Activated CD4-positive, alpha-beta memory T cell treated with anti-CD3 and anti-CD28 coated beads for 36 hours (primary cell): ENCODE measurements at regions of chr6 and their contacts with region 1.

Region 1: GRCh38 chr6:118709859-118710350 is 58.5 kb upstream of the CEP85L start:
- DNase-seq: peak; percentile 88
- H3K4me3 Mint-ChIP-seq: peak overlapping the region; percentile 95
- H3K27ac Mint-ChIP-seq: peak overlapping the region; percentile 98
- H3K4me1 Mint-ChIP-seq: peaks cover 72% of the 10 kb centered on the region
- H3K27me3 Mint-ChIP-seq: no peaks in the 10 kb centered on the region

Region 2: DNA sequence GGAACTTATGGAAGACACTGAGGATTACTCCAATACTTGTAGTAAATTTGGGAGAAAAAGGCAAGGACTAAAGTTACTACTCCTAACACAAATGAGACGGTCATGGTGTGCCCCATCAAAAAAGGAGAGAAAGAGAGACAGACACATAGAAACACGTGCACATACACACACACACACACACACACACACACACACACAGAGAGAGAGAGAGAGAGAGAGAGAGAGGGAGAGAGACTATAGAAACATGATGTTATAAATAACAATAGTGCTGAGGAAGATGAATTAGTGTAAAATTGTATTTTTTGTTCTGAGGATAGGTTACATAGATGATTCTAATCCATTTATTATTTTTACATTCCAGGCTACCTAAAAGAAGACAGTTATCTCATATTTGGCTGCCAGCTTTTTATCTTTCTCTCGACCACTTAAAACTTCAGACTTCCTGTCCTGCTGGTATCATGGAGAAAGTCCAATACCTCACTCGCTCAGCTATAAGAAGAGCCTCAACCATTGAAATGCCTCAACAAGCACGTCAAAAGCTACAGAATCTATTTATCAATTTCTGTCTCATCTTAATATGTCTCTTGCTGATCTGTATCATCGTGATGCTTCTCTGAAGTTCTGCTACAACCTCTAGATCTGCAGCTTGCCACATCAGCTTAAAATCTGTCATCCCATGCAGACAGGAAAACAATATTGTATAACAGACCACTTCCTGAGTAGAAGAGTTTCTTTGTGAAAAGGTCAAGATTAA is 151.3 kb before region 1 on chr6:
- CTCF ChIA-PET with region 1: no interaction called
- POLR2A ChIA-PET with region 1: no interaction called
- intact Hi-C with region 1: loop called (anchors 5 kb)
- DNase-seq: peak; percentile 22
- H3K4me3 Mint-ChIP-seq: peak overlapping the region; percentile 35
- H3K27ac Mint-ChIP-seq: peak overlapping the region; percentile 85
- H3K4me1 Mint-ChIP-seq: peaks cover 32% of the 10 kb centered on the region
- H3K27me3 Mint-ChIP-seq: no peaks in the 10 kb centered on the region

Region 3: DNA sequence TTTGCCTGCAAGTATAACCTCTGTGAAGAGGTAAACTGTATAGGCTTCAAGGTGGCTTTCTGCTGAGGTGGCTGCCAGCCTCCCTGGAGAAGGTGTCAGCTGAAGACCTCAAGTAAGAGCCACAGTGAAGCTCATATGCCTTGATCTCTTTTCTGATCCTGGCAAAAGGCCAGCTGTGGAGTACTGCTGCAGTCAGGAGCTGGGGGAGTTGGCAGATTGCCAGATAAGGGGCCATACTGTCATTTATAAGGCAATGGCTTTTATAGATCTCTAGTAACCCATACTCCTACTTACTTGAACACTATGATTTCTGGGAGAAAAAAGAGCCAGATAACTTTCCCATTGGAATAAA is 49.7 kb before region 1 on chr6:
- CTCF ChIA-PET with region 1: interaction called, 12 read pairs
- POLR2A ChIA-PET with region 1: interaction called, 10 read pairs
- intact Hi-C with region 1: loop called (anchors 1 kb)
- DNase-seq: peak; percentile 54
- H3K4me3 Mint-ChIP-seq: peak overlapping the region; percentile 33
- H3K27ac Mint-ChIP-seq: peak overlapping the region; percentile 82
- H3K4me1 Mint-ChIP-seq: peaks cover 68% of the 10 kb centered on the region
- H3K27me3 Mint-ChIP-seq: no peaks in the 10 kb centered on the region

Region 4: DNA sequence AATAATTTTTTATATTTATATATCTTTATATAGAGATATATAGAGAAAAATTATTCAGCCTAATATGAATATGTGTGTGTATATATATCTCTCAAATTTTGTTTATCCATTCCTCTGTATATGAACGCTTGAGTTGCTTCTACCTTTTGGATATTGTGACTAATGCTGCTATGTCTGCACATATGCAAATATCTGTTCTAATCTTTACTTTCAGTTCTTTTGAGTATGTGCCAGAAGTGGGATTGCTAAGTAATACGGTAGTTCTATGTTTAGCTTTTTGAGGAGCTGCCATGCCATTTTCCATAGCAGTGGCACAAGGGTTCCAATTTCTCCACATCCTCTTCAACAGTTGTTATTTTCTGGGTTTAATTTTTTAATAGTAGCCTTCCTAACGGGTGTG is 14.3 kb after region 1 on chr6:
- CTCF ChIA-PET with region 1: interaction called, 18 read pairs
- POLR2A ChIA-PET with region 1: interaction called, 25 read pairs
- intact Hi-C with region 1: loop called (anchors 1 kb)
- DNase-seq: no peak
- H3K4me3 Mint-ChIP-seq: no peak overlapping the region
- H3K27ac Mint-ChIP-seq: peak overlapping the region; percentile 24
- H3K4me1 Mint-ChIP-seq: peaks cover 55% of the 10 kb centered on the region
- H3K27me3 Mint-ChIP-seq: no peaks in the 10 kb centered on the region

Region 5: DNA sequence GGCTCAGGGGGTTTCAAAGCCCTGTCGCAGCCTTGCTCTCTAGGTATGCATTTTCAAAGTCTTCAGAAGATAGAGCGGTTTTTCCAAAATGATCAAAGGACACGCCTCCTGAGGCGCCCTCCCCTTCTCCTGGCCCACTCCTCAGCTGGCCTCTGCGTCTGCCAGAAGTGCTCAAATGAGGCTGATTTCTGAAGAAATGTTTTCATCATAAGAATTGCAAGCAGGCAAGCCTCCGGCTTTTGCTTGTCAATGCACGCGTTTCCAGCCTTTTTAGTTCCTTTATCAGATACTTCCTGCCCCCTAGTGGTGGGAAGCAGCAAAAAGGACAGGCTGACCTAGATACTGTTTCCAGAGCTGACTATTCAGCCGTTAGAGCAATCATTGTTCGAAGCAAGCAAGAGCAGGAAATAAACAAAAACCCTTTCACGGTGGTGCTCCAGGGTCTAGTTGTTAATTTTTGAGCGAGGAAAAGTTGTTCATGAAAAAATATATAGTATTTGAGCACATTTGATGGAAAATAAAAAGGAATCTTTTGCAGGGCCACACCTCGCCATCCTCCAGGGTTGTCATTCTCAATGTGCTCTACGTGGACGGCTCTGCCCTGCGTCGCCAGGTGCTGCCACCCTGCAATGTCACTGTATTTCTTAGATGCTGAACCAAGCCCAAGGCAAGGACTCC is 90.6 kb after region 1 on chr6:
- CTCF ChIA-PET with region 1: interaction called, 5 read pairs
- POLR2A ChIA-PET with region 1: interaction called, 3 read pairs
- intact Hi-C with region 1: loop called (anchors 1 kb)
- DNase-seq: peak; percentile 89
- H3K4me3 Mint-ChIP-seq: peak overlapping the region; percentile 28
- H3K27ac Mint-ChIP-seq: peak overlapping the region; percentile 16
- H3K4me1 Mint-ChIP-seq: peaks cover 28% of the 10 kb centered on the region
- H3K27me3 Mint-ChIP-seq: no peaks in the 10 kb centered on the region

Region 6: DNA sequence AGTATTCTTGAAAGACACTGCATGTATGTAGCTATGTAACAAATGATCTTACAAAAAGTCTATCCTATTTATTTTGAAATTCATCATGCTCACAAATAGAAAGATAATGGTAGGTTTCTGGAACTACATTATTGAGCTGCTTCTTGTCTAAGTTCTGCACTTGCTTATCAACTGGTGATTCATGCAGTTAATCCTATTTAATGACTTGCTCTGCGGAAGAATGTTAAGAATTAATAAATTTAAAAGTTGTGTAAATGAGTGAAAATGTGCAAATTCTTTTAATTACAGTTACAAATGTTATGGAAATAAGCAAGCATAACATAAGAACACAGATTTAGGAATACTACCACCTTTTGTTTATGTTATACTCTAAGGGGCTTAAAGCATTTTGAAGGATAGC is 292.2 kb after region 1 on chr6:
- CTCF ChIA-PET with region 1: no interaction called
- POLR2A ChIA-PET with region 1: no interaction called
- intact Hi-C with region 1: no loop called
- DNase-seq: no peak
- H3K4me3 Mint-ChIP-seq: no peak overlapping the region
- H3K27ac Mint-ChIP-seq: no peak overlapping the region
- H3K4me1 Mint-ChIP-seq: no peaks in the 10 kb centered on the region
- H3K27me3 Mint-ChIP-seq: no peaks in the 10 kb centered on the region

Region 7: DNA sequence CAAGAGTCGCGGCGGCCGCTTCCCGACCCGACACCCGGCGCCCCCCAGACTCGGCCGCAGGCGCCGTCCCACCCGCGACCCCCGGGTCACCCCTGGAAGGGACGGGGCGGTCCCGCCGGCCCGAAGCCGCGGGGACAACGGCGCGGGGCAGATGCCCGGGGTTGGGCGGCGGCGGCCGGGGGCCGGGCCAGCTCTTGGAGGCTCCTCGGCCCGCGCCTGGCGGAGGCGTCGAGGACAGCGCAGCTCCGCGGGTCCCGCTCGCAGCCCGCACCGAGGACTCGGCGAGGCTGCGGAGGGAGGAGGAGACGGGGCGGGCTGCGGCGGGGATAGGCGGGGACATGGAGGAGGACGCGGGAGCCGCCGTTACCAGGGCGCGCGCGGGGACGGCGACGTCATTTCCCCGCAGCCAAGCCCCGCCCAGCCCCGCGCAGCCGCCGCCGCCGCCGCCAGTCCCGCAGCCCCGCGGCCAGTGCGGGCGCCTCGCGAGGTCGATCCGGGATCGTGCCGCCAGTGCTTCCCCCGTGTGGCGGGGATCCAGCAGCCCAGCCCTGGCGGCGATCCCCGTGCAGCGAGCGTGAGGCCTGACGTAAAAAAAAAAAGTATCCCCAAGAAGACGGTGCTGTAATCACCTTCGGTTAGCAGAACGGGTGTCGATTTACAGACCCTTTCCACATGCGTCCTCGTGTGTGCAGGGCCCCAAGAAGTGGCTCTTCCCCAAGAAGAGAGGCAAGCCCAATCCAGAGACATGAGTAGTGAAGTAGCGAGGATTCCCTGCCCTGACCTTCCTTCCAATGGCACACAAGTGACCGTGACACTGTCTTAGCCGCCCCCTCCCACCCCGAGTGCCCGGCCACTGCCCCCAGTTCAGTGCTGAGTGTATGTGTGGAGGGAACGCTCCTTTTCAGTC is 368.7 kb after region 1 on chr6 and contains the start of gene FAM184A:
- CTCF ChIA-PET with region 1: no interaction called
- POLR2A ChIA-PET with region 1: no interaction called
- intact Hi-C with region 1: loop called (anchors 2 kb)
- DNase-seq: peak; percentile 77
- H3K4me3 Mint-ChIP-seq: peak within 1 kb of the TSS; percentile 88
- H3K27ac Mint-ChIP-seq: peak within 1 kb of the TSS; percentile 90
- H3K4me1 Mint-ChIP-seq: peaks cover 46% of the 10 kb centered on the region
- H3K27me3 Mint-ChIP-seq: no peaks in the 10 kb centered on the region
- total RNA-seq, gene FAM184A: 7.6 to 10.8 TPM